ENCODE measurements at regions of chr4 and their contacts with region 1.

Region 1: DNA sequence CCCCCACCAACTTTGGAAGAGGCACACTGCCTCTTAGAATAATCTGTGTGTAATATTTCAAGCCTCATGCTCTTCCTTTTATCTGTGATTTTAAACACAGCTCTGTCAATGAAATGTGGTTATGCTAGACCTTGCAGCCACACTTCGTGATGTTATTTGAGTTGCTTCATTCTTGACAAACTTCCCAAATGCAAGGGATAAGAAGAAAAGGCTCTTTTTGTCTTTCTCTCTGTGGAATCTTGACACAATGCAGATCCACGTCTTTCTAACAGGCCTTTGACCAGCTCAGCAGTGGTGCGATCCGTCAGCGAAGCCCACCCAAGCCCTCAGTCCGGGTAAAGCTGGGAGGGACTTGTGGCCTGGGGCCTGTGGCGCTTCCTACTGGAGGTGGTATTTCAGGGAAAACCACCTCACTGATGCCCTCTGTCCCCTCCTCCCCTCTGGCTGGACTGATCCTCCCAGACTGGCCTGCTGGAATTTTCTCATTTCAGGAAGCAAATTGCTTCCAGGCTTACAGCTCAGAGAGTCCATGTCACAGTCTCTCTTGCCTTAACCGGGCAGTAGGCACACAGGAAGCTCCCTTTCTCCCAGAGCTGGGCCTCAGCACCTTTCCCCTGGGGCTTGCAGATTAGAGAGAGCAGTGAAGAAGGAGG is 19.5 kb upstream of the CCKAR start:
- DNase-seq: no peak
- H3K4me3 ChIP-seq: no peak overlapping the region
- H3K27ac ChIP-seq: no peak overlapping the region
- H3K4me1 ChIP-seq: no peaks in the 10 kb centered on the region
- H3K27me3 ChIP-seq: no peaks in the 10 kb centered on the region
- CTCF ChIP-seq: no peak
- POLR2A ChIP-seq: no peak

Region 2: GRCh38 chr4:26476545-26476944 is 33.3 kb before region 1 on chr4:
- intact Hi-C with region 1: loop called (anchors 1 kb)
- DNase-seq: no peak
- H3K4me3 ChIP-seq: no peak overlapping the region
- H3K27ac ChIP-seq: no peak overlapping the region
- H3K4me1 ChIP-seq: no peaks in the 10 kb centered on the region
- H3K27me3 ChIP-seq: no peaks in the 10 kb centered on the region
- CTCF ChIP-seq: no peak
- POLR2A ChIP-seq: no peak